ENCODE measurements at regions of chr2 and their contacts with region 1.

Region 1: GRCh38 chr2:69012310-69013141 is 453 bp upstream of the ANTXR1 start:
- DNase-seq: peak; percentile 84
- H3K4me3 ChIP-seq: peak overlapping the region; percentile 71 to 94 (median 88)
- H3K27ac ChIP-seq: peak overlapping the region; percentile 80 to 94 (median 92)
- H3K4me1 ChIP-seq: peaks cover 0 to 46% (median 29%) of the 10 kb centered on the region in 4 donors
- H3K27me3 ChIP-seq: no peaks in the 10 kb centered on the region
- CTCF ChIP-seq: peak; percentile 71 to 93 (median 84)
- EP300 ChIP-seq: no peak
- POLR2A ChIP-seq: no peak

Region 2: GRCh38 chr2:68943581-68944568 is 68.7 kb before region 1 on chr2:
- intact Hi-C with region 1: loop called (anchors 10 kb)
- DNase-seq: peak; percentile 78
- H3K4me3 ChIP-seq: no peak overlapping the region
- H3K27ac ChIP-seq: peak overlapping the region in 1 of 4 donors; percentile 15
- H3K4me1 ChIP-seq: peaks cover 0 to 8% (median 1%) of the 10 kb centered on the region in 4 donors
- H3K27me3 ChIP-seq: no peaks in the 10 kb centered on the region
- CTCF ChIP-seq: peak; percentile 48 to 84 (median 68)
- EP300 ChIP-seq: no peak
- POLR2A ChIP-seq: no peak

Region 3: GRCh38 chr2:69118609-69119008 is 106.1 kb after region 1 on chr2:
- intact Hi-C with region 1: loop called (anchors 10 kb)
- DNase-seq: peak; percentile 71
- H3K4me3 ChIP-seq: no peak overlapping the region
- H3K27ac ChIP-seq: peak overlapping the region; percentile 65 to 81 (median 78)
- H3K4me1 ChIP-seq: peaks cover 0 to 39% (median 28%) of the 10 kb centered on the region in 4 donors
- H3K27me3 ChIP-seq: no peaks in the 10 kb centered on the region
- CTCF ChIP-seq: no peak
- EP300 ChIP-seq: no peak
- POLR2A ChIP-seq: no peak

Region 4: DNA sequence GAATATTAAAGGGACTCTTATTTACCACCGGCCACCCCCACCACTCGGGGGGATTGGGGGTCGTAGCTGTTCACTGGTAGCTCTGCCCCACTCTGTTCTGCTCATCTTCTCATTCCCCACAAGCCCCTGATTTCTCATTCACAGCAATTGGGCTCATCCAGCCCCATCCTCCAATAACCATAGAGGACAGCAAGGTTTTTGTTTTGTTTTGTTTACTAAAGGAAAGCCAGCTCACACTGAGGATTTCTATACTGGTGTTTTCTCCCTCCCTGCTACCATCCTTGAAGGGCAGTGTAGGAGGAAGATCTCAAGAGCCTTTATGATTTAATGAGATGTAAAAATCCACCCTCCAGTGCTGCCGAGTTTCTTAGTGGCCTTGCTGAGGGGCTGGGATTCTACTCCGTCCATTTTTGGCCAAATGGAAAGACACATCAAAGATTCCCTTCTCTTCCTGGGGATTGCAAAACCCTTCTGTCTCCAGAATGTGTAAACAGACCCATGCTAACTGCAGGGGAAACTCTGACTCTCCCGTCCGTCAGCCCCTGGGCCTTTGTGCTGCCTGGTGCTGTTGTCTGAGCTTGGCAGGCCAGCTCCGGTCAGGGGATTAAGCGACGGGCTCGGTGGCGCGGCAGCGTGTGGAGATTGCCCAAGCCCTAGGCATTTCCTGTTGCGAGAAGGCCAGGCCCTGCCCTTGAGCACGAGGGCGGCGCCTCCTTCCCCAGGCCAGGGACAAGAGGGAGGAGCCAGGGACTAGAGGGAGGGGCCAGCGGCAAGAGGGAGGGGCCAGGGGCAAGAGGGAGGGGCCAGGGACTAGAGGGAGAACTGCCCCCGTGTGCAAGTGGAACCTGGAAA is 165.5 kb after region 1 on chr2:
- intact Hi-C with region 1: loop called (anchors 10 kb)
- DNase-seq: peak; percentile 97
- H3K4me3 ChIP-seq: peak overlapping the region in 2 of 4 donors; percentile 12 to 13
- H3K27ac ChIP-seq: peak overlapping the region; percentile 75 to 90 (median 85)
- H3K4me1 ChIP-seq: peaks cover 0 to 55% (median 34%) of the 10 kb centered on the region in 4 donors
- H3K27me3 ChIP-seq: no peaks in the 10 kb centered on the region
- CTCF ChIP-seq: no peak
- EP300 ChIP-seq: peak in 3 of 4 donors; percentile 26 to 76 (median 70)
- POLR2A ChIP-seq: no peak

Region 5: GRCh38 chr2:69386789-69387734 is 374.5 kb after region 1 on chr2 and contains the start of gene GFPT1:
- intact Hi-C with region 1: loop called (anchors 5 kb)
- DNase-seq: peak; percentile 96
- H3K4me3 ChIP-seq: peak within 1 kb of the TSS; percentile 78 to 99 (median 88)
- H3K27ac ChIP-seq: peak within 1 kb of the TSS; percentile 82 to 91 (median 88)
- H3K4me1 ChIP-seq: peaks cover 0 to 41% (median 21%) of the 10 kb centered on the region in 4 donors
- H3K27me3 ChIP-seq: no peaks in the 10 kb centered on the region
- CTCF ChIP-seq: no peak
- EP300 ChIP-seq: no peak
- POLR2A ChIP-seq: peak; percentile 16 to 28
- total RNA-seq, gene GFPT1: 14.5 to 24.4 (median 18.7) TPM

Region 6: DNA sequence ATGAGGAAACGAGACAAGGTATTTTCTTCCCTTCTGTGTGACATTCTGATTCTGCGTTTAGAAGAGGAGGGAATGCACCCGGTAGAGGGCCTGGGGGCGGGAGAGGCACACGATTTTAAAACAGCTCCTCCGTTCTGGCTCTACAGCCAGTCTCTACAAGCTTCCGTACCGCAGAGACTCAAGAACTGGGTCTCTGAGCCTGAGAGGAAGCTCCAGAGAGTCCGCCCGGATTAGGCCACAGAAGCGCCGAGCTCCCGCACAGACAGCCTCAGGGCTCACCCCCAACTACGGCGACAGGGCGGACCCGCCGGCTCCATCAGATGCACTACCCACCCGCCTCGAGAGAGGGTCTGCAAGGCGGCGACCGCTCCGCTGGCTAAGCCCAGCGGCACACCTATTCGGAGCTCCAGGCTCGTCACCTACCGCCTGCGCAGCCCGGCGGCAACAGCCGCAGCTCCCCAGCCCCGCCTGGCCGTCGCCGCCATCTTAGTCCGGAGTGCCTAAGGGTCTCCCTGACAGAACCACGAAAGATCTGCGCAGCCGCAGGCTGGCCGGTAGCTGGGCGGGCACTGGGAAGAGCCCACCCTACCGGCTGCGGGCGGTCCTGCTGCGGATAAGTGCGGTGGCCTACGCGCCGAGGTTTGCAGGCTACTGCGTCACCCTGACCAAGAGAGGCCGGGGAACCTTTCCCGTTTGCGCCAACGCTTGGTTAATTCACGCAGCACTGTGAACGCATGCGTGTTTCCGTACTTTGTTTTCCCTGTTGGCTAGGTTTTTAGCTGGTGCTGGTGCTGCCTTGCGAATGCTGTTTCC is 424.6 kb after region 1 on chr2 and contains the start of gene NFU1:
- intact Hi-C with region 1: loop called (anchors 5 kb)
- DNase-seq: peak; percentile 98
- H3K4me3 ChIP-seq: peak within 1 kb of the TSS; percentile 77 to 92 (median 84)
- H3K27ac ChIP-seq: peak within 1 kb of the TSS; percentile 94 to 96 (median 94)
- H3K4me1 ChIP-seq: peaks cover 0 to 31% (median 22%) of the 10 kb centered on the region in 4 donors
- H3K27me3 ChIP-seq: no peaks in the 10 kb centered on the region
- CTCF ChIP-seq: peak; percentile 61 to 70 (median 65)
- EP300 ChIP-seq: peak in 1 of 4 donors; percentile 45
- POLR2A ChIP-seq: peak; percentile 54 to 71
- total RNA-seq, gene NFU1: 43.2 to 91.4 (median 74.2) TPM

Measured in sigmoid colon (tissue), 7 donors.